ENCODE measurements at regions of chr12 and their contacts with region 1.

Region 1: GRCh38 chr12:16385782-16386646 is 38.6 kb downstream of the MGST1 start:
- DNase-seq: peak; percentile 47
- H3K4me3 Mint-ChIP-seq: peak overlapping the region; percentile 23
- H3K27ac Mint-ChIP-seq: peak overlapping the region; percentile 18
- H3K4me1 Mint-ChIP-seq: peaks cover 41% of the 10 kb centered on the region
- H3K27me3 Mint-ChIP-seq: no peaks in the 10 kb centered on the region
- CTCF ChIP-seq: peak; percentile 44

Region 2: GRCh38 chr12:16246264-16246663 is 139.8 kb before region 1 on chr12:
- CTCF ChIA-PET with region 1: no interaction called
- intact Hi-C with region 1: no loop called
- DNase-seq: no peak
- H3K4me3 Mint-ChIP-seq: no peak overlapping the region
- H3K27ac Mint-ChIP-seq: no peak overlapping the region
- H3K4me1 Mint-ChIP-seq: peaks cover 7% of the 10 kb centered on the region
- H3K27me3 Mint-ChIP-seq: no peaks in the 10 kb centered on the region
- CTCF ChIP-seq: no peak

Region 3: DNA sequence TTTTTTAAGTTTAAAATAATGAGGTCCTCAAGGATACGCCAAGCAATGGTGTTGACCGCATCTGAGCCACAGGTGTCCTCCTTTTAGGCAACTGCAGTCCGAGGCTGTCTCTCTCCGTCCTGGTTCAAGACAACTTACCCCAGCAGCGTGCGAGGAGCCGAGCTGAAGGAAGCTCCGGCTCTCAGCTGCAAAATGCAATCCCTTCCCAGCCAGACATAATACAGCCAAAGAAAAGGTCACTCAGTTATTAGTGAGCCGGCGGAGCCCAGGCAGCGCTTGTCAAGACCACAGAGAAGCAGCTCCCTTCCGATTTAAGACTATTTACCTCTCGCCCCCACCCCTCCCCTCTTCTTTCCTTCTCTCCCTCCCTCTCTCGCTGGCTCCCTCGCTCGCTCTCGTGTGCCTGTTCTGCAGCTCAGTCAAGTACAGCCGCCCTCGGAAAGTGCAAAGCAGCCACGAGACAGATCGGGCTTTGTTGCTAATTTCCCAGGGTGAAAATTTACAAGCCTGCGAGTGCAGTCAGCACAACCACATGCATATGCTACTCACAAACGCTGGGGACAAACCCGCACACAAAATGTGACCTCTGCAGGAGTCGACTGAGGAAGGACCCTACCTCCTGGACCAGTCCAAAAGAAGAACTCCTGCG is 220.3 kb after region 1 on chr12:
- CTCF ChIA-PET with region 1: interaction called, 10 read pairs
- intact Hi-C with region 1: no loop called
- DNase-seq: peak; percentile 29
- H3K4me3 Mint-ChIP-seq: peak overlapping the region; percentile 71
- H3K27ac Mint-ChIP-seq: no peak overlapping the region
- H3K4me1 Mint-ChIP-seq: no peaks in the 10 kb centered on the region
- H3K27me3 Mint-ChIP-seq: no peaks in the 10 kb centered on the region
- CTCF ChIP-seq: no peak

Region 4: DNA sequence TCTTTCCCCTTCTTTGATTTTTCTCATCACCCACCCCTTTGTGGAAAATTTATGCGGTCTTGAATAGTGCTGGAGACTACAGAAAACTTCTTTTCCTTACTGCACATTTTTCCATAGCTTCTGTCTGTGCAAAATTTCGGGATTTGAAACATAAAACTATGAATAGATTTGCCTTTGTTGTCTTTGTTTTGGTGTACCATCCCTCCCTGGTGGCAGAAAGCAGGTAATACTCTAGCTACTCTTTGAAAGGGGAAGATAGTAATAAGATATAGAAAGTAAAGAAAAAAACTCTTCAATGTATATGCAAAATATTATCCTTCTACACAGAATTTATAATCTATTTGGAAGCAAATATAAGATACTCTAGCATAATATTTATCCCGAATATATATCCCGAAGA is 299.1 kb after region 1 on chr12:
- CTCF ChIA-PET with region 1: interaction called, 8 read pairs
- intact Hi-C with region 1: loop called (anchors 5 kb)
- DNase-seq: no peak
- H3K4me3 Mint-ChIP-seq: no peak overlapping the region
- H3K27ac Mint-ChIP-seq: no peak overlapping the region
- H3K4me1 Mint-ChIP-seq: no peaks in the 10 kb centered on the region
- H3K27me3 Mint-ChIP-seq: no peaks in the 10 kb centered on the region
- CTCF ChIP-seq: no peak

Region 5: DNA sequence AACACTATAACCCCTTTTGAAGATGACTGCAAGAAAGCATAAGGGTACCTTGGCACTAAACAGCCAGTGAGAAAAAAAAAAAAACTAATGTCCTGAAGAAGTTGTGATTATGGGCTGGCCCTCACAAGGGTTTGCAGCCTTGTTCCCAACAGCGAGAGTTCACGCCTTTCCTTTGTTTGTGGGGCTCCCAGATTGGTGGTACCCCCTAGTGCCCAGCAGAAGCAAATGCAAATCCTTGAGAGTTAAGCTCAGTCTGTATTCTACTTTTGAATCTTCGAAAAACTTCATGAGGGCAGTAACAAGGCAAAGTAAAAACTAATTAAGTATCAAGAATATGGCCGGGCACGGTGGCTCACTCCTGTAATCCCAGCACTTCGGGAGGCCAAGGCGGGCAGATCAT is 458.9 kb after region 1 on chr12:
- CTCF ChIA-PET with region 1: interaction called, 4 read pairs
- intact Hi-C with region 1: loop called (anchors 10 kb)
- DNase-seq: no peak
- H3K4me3 Mint-ChIP-seq: no peak overlapping the region
- H3K27ac Mint-ChIP-seq: no peak overlapping the region
- H3K4me1 Mint-ChIP-seq: no peaks in the 10 kb centered on the region
- H3K27me3 Mint-ChIP-seq: no peaks in the 10 kb centered on the region
- CTCF ChIP-seq: no peak